ENCODE measurements at regions of chrX and their contacts with region 1.

Region 1: GRCh38 chrX:69615779-69616456 is at the start of gene EDA:
- DNase-seq: peak; percentile 73
- ATAC-seq: peak; percentile 92
- H3K4me3 ChIP-seq: peak within 1 kb of the TSS; percentile 68 to 74 (median 73)
- H3K27ac ChIP-seq: peak within 1 kb of the TSS; percentile 57
- H3K4me1 ChIP-seq: peaks cover 70% of the 10 kb centered on the region
- H3K27me3 ChIP-seq: no peaks in the 10 kb centered on the region
- CTCF ChIP-seq: 0 out of 2 replicates have a peak, but pooled peaks have one; percentile 6
- EP300 ChIP-seq: no peak
- POLR2A ChIP-seq: peak in 1 of 2 experiments; percentile 39; a peak in 1 of 4 replicates
- RAD21 ChIP-seq: no peak
- total RNA-seq, gene EDA: 6.4 and 8.8 TPM in 2 replicates

Region 2: DNA sequence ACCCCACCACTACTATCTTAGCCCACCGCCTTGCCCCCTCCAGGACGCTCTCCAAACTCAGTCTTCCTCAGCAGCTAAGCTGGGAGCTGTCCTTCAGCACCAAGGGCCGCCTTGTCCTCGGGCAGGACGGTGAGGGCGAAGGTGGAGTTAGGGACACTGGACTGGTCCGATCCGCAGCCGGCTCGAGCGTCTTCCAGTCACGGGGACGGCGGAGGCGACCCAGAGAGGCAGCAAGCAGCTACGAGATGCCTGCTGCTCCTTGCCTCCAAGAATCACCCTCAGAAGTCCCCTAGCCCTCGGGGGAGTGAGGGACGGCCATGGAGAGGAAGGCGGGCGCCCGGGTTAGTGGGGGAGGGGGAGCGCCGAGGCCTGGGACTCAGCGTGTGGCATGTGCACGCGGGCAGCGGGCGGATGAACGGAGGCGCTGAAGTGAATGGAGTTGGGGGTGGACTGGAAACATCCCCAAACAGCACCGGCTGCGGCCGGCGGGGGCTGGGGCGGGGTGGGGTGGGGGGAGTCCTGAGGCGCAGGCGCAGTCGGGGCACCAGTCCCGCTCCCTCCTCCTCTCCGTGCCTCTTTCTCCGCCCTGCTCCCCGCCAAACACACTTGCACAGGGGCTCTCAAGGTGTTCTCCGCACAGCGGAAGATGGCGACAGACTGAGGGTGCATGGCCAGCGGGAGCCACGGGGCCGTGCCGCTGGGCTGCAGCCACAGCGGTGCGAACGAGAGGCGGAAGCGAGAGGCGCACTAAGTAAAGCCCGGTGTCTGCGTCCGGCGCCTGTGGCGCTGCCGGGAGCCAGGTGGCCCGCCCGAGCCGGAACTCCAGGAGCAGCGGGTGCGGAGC is 111.9 kb before region 1 on chrX and contains the start of gene NALF2:
- CTCF ChIA-PET with region 1: no interaction called
- POLR2A ChIA-PET with region 1: no interaction called
- in situ Hi-C with region 1: no loop called
- intact Hi-C with region 1: loop called (anchors 2 kb)
- DNase-seq: peak; percentile 59
- ATAC-seq: peak; percentile 76
- H3K4me3 ChIP-seq: peak within 1 kb of the TSS; percentile 55 to 75 (median 63); a peak in 5 of 6 replicates
- H3K27ac ChIP-seq: peak within 1 kb of the TSS; percentile 76
- H3K4me1 ChIP-seq: peaks cover 45% of the 10 kb centered on the region
- H3K27me3 ChIP-seq: no peaks in the 10 kb centered on the region; a peak in 1 of 5 replicates
- CTCF ChIP-seq: peak; percentile 16; the same call in 1 of the 2 replicates
- EP300 ChIP-seq: no peak
- POLR2A ChIP-seq: peak; percentile 21 to 67; a peak in 2 of 4 replicates
- RAD21 ChIP-seq: no peak
- total RNA-seq, gene NALF2: 3.0 and 4.0 TPM in 2 replicates

Region 3: GRCh38 chrX:69538321-69538876 is 77.5 kb before region 1 on chrX:
- CTCF ChIA-PET with region 1: interaction called, 19 read pairs
- POLR2A ChIA-PET with region 1: interaction called, 9 read pairs
- in situ Hi-C with region 1: loop called (anchors 5 kb)
- intact Hi-C with region 1: loop called (anchors 1 kb)
- DNase-seq: peak; percentile 52
- ATAC-seq: peak; percentile 98
- H3K4me3 ChIP-seq: peak overlapping the region; percentile 63 to 73 (median 73)
- H3K27ac ChIP-seq: no peak overlapping the region
- H3K4me1 ChIP-seq: peaks cover 42% of the 10 kb centered on the region
- H3K27me3 ChIP-seq: no peaks in the 10 kb centered on the region
- CTCF ChIP-seq: peak; percentile 97
- EP300 ChIP-seq: no peak
- POLR2A ChIP-seq: no peak
- RAD21 ChIP-seq: peak; percentile 95

Region 4: DNA sequence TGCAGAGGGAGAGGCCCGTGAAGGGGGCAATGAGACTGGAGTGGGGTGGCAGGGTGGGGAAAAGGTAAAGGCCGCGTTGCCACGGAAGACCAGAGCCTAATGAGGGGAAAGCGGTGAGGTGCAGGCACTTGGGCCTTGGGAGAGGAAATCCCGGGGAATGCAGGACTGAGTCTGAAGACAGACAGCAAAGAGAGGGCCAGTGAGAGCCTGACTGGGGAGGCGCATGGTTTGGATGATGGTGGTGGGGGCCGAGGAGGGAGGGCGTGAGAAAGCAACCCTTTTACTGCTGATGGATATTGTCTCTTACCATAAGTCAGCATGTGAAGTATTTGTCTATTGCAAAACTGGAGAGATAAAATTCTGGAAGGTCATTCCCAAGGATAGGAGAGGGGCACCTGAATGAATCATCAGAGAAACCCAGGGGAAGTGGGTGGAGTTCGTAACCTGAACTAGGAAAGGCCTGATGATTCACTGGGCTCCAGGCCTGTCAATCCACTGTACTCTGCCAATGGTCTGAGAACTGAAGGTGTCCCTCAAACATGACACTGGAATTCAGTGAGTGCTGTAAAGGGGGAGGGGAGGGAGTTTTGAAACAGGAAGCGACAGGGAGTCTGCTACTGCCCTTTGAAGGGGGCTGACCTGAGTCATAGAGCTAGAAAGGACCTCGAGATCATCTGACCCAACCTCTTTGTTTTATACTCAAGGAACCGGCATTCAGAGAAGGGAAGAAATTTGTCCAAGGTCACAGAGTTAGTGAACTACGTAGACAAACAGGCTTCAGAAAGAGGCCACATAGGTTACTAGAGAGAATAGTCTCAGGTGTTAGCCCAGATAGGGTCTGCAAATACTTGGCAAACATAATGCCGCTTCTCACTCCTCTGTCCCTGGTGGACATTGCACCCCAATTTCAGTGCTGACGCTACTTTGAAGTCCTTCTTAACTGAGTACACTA is 59.6 kb before region 1 on chrX:
- CTCF ChIA-PET with region 1: no interaction called
- POLR2A ChIA-PET with region 1: interaction called, 9 read pairs
- in situ Hi-C with region 1: no loop called
- intact Hi-C with region 1: loop called (anchors 2 kb)
- DNase-seq: peak; percentile 99
- ATAC-seq: peak; percentile 95
- H3K4me3 ChIP-seq: peak overlapping the region; percentile 41 to 61 (median 45); a peak in 5 of 6 replicates
- H3K27ac ChIP-seq: peak overlapping the region; percentile 99
- H3K4me1 ChIP-seq: peaks cover 68% of the 10 kb centered on the region
- H3K27me3 ChIP-seq: no peaks in the 10 kb centered on the region
- CTCF ChIP-seq: no peak
- EP300 ChIP-seq: peak; percentile 57 to 78; a peak in 3 of 4 replicates
- POLR2A ChIP-seq: 0 out of 4 replicates have a peak, but pooled peaks have one; percentile 34 to 41
- RAD21 ChIP-seq: no peak

Region 5: GRCh38 chrX:69603566-69604194 is 12.2 kb before region 1 on chrX:
- CTCF ChIA-PET with region 1: no interaction called
- POLR2A ChIA-PET with region 1: no interaction called
- in situ Hi-C with region 1: no loop called
- intact Hi-C with region 1: no loop called
- DNase-seq: no peak
- ATAC-seq: no peak
- H3K4me3 ChIP-seq: no peak overlapping the region
- H3K27ac ChIP-seq: no peak overlapping the region
- H3K4me1 ChIP-seq: peaks cover 8% of the 10 kb centered on the region; the same call in 1 of the 2 replicates
- H3K27me3 ChIP-seq: no peaks in the 10 kb centered on the region
- CTCF ChIP-seq: no peak
- EP300 ChIP-seq: no peak
- POLR2A ChIP-seq: no peak
- RAD21 ChIP-seq: no peak

Region 6: DNA sequence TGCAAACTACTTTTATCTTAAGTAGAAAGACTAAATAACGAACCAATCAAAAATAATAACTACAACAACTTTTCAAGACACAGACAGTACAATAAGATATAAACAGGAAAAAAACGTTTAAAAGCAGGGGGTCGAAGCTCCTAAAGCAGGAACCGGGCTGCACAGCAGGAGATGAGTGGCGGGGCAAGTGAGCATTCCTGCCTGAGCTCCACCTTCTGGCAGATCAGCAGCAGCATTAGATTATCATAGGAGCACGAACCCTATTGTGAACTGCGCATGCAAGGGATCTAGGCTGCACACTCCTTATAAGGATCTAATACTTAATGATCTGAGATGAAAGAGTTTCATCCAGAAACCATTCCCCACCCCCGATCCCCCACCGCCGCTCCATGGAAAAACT is 1146.4 kb after region 1 on chrX:
- CTCF ChIA-PET with region 1: no interaction called
- POLR2A ChIA-PET with region 1: no interaction called
- in situ Hi-C with region 1: no loop called
- intact Hi-C with region 1: no loop called
- DNase-seq: no peak
- ATAC-seq: no peak
- H3K4me3 ChIP-seq: no peak overlapping the region
- H3K27ac ChIP-seq: no peak overlapping the region
- H3K4me1 ChIP-seq: no peaks in the 10 kb centered on the region
- H3K27me3 ChIP-seq: no peaks in the 10 kb centered on the region
- CTCF ChIP-seq: peak; percentile 34; the same call in 1 of the 2 replicates
- EP300 ChIP-seq: no peak
- POLR2A ChIP-seq: no peak
- RAD21 ChIP-seq: no peak